Activated CD4-positive, alpha-beta T cell treated with anti-CD3 and anti-CD28 coated beads for 36 hours (primary cell): ENCODE measurements at regions of chr16 and their contacts with region 1.

Region 1: DNA sequence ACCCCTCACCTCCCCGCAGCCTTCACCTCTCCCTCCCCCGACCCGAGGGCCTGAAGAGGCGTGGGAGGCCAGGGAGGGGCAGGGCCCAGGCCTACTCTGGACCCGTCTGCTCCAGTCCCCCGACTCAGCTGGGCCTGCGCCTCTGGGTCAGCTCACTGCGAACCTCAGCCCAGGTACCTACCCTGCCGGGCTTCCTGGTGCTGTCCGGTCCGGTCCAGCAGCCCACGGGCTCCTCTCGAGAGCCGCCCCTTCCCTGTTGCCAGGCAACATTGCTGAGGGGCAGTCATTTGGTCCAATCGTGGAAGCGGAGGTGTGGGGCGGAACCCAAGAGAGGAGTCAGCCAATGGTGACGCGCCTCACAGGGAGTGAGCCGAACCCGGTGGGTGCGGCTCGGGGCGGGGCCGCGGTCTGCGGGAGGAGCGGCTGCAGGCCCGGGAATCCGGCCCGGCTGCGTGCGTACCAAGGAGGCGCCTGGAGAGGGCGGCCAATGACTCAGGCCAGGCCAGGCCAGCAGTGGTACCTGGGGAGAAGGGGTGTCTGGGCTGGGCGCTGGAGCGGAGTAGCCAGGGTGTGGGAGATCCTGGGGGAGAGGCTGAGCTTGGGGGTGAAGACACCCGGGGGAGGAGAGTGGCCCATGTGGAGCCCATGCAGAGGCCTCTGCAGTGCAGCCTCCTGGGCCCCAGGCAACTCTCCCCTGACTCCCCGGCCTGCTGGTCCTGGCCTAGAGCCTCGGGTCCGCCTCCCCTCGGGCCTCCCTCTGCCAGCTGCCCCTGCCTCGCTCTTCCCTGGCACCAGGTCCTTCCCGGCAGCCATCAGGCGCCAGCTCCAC is at the start of gene MEAK7:
- DNase-seq: peak; percentile 99
- ATAC-seq: peak; percentile 96
- H3K4me3 Mint-ChIP-seq: peak within 1 kb of the TSS; percentile 89
- H3K27ac Mint-ChIP-seq: peak within 1 kb of the TSS; percentile 90
- H3K4me1 Mint-ChIP-seq: peaks cover 39% of the 10 kb centered on the region
- H3K27me3 Mint-ChIP-seq: no peaks in the 10 kb centered on the region
- total RNA-seq, gene MEAK7: 8.9 to 10.6 TPM

Region 2: GRCh38 chr16:83952940-83953795 is 551.5 kb before region 1 on chr16 and contains the start of gene OSGIN1:
- CTCF ChIA-PET with region 1: interaction called, 4 read pairs
- POLR2A ChIA-PET with region 1: no interaction called
- intact Hi-C with region 1: loop called (anchors 1 to 10 kb)
- DNase-seq: peak; percentile 94
- ATAC-seq: peak; percentile 95
- H3K4me3 Mint-ChIP-seq: peak within 1 kb of the TSS; percentile 66
- H3K27ac Mint-ChIP-seq: peak within 1 kb of the TSS; percentile 55
- H3K4me1 Mint-ChIP-seq: peaks cover 19% of the 10 kb centered on the region
- H3K27me3 Mint-ChIP-seq: peaks cover 16% of the 10 kb centered on the region
- total RNA-seq, gene OSGIN1: 0.75 to 1.0 TPM

Region 3: GRCh38 chr16:84116720-84117493 is 387.7 kb before region 1 on chr16 and contains the start of gene MBTPS1:
- CTCF ChIA-PET with region 1: no interaction called
- POLR2A ChIA-PET with region 1: no interaction called
- intact Hi-C with region 1: loop called in 1 of 2 experiments (anchors 10 kb)
- DNase-seq: peak; percentile 99
- ATAC-seq: peak; percentile 93
- H3K4me3 Mint-ChIP-seq: peak within 1 kb of the TSS; percentile 80
- H3K27ac Mint-ChIP-seq: peak within 1 kb of the TSS; percentile 95
- H3K4me1 Mint-ChIP-seq: peaks cover 31% of the 10 kb centered on the region
- H3K27me3 Mint-ChIP-seq: no peaks in the 10 kb centered on the region
- total RNA-seq, gene MBTPS1: 32.0 to 32.2 TPM

Region 4: GRCh38 chr16:84277237-84277823 is 227.3 kb before region 1 on chr16:
- CTCF ChIA-PET with region 1: interaction called, 19 read pairs
- POLR2A ChIA-PET with region 1: no interaction called
- intact Hi-C with region 1: loop called (anchors 1 kb)
- DNase-seq: peak; percentile 86
- ATAC-seq: peak; percentile 73
- H3K4me3 Mint-ChIP-seq: no peak overlapping the region
- H3K27ac Mint-ChIP-seq: no peak overlapping the region
- H3K4me1 Mint-ChIP-seq: no peaks in the 10 kb centered on the region
- H3K27me3 Mint-ChIP-seq: peaks cover 2% of the 10 kb centered on the region

Region 5: DNA sequence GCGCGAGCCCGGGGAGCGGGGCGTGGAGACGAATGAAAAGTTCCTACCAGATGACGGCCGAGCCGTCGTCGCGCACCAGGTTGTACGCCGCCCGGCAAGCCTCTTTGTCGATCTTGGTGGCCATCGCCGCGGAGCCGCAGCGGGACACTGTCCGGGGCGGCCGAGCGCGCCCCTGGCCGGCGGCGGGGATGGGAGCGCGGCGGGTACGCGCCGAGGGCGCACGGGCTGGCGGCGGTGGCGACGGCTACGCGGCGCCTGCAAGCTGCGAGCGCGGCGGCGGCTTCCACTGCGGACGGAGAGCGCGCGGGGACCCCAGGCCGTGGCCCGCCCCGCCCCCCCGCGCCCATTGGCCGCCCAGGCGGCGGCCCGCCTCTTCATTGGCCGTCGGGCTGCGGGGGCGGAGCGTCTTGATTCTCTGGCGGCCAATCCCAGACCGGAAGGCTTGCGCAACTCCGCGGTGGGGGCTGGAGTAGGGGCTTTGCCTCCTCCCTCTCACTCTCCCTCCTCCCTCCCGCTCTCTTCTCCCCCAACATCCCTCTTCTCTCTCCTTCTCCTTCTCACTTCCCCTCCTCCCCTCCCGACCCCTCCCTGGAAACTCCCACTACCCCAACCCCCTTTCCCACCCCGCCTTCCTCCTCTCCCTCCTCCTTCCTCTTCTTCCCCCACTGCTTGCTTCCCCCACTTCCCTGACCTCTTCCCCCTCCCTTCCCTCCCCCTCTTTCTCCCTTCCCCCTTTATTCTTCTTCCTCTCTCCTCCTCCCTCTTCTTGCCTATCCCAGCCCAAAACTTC is 113.4 kb after region 1 on chr16 and contains the start of gene COTL1:
- CTCF ChIA-PET with region 1: interaction called, 76 read pairs
- POLR2A ChIA-PET with region 1: no interaction called
- intact Hi-C with region 1: loop called in 1 of 2 experiments (anchors 1 kb)
- DNase-seq: peak; percentile 98
- ATAC-seq: peak; percentile 77
- H3K4me3 Mint-ChIP-seq: peak within 1 kb of the TSS; percentile 98
- H3K27ac Mint-ChIP-seq: peak within 1 kb of the TSS; percentile 87
- H3K4me1 Mint-ChIP-seq: peaks cover 41% of the 10 kb centered on the region
- H3K27me3 Mint-ChIP-seq: no peaks in the 10 kb centered on the region
- total RNA-seq, gene COTL1: 353 to 384 TPM

Region 6: DNA sequence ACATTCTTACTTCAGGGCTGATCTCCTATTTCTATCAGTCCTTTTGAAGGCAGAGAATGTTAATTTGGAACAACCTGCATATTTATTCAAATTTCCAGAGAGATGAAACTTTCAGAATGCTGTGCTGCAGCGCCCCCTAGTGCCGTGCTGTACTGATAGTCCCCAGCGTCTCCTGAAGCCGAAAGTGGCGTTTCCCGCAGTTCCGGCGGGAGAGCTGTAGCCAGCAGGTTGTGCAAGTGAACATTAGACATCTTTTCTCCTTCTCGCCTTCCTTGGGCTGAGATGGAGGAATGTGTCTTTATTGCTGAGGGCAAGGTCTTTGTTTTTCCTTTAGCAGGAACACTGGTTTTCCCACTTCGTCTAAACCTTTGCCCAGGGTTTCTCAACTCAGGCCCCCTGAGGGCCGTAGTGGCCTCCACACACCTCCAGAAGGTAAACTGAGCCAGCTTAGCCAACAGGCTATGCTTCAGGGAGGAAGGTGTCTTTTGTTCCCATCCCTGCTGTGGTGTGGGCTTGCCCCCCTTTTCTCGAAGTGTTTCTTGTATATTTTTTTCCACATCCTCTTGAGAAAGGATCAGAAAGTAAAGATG is 221.5 kb after region 1 on chr16:
- CTCF ChIA-PET with region 1: interaction called, 11 read pairs
- POLR2A ChIA-PET with region 1: no interaction called
- intact Hi-C with region 1: no loop called
- DNase-seq: peak; percentile 92
- ATAC-seq: peak; percentile 60
- H3K4me3 Mint-ChIP-seq: peak overlapping the region; percentile 48
- H3K27ac Mint-ChIP-seq: peak overlapping the region; percentile 58
- H3K4me1 Mint-ChIP-seq: peaks cover 83% of the 10 kb centered on the region
- H3K27me3 Mint-ChIP-seq: no peaks in the 10 kb centered on the region